GM12878 (cell line): ENCODE measurements at regions of chr19 and their contacts with region 1.

Region 1: DNA sequence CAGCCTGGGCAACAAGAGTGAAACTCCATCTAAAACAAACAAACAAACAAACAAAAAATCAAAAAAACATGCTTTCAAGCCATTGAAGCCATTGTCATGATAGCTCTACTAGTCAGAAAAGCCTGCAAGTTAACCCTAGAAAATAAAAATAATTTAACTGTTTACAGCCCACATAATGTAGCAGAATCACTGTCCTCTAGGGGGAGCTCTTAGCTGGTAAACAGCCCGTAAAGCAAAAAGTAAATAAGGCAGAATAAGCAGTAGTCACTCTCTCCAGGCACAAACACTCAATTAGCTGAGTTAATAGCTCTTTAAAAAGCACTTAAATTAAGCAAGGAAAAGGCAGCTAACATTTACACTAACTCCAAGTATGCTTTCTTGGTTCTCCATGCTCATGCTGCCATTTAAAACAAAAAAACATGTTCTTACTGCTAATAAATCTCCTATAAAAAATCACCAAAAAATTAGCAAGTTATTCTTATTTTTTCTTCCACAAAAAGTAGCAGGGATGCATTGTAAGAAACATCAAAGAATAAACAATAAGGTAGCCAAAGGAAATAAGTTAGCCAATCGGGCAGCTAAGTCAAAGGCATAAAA is 11.3 kb downstream of the LILRB4 start:
- DNase-seq: no peak
- ATAC-seq: peak; percentile 79
- H3K4me3 ChIP-seq: no peak overlapping the region
- H3K27ac ChIP-seq: no peak overlapping the region
- H3K4me1 ChIP-seq: no peaks in the 10 kb centered on the region
- H3K27me3 ChIP-seq: peaks cover 0 to 5% of the 10 kb centered on the region in 2 experiments; a peak in 2 of 4 replicates
- CTCF ChIP-seq: peak; percentile 57 to 74 (median 74)
- EP300 ChIP-seq: no peak
- POLR2A ChIP-seq: no peak
- RAD21 ChIP-seq: peak; percentile 70

Region 2: GRCh38 chr19:54473021-54473891 is 200.9 kb before region 1 on chr19 and contains the start of gene CDC42EP5:
- CTCF ChIA-PET with region 1: interaction called, 236 read pairs
- POLR2A ChIA-PET with region 1: no interaction called
- RAD21 ChIA-PET with region 1: interaction called, 43 read pairs
- SMC1A ChIA-PET with region 1: interaction called, 118 read pairs
- in situ Hi-C with region 1: loop called (anchors 5 kb)
- intact Hi-C with region 1: no loop called
- DNase-seq: no peak
- ATAC-seq: peak; percentile 51
- H3K4me3 ChIP-seq: no peak within 1 kb of the TSS
- H3K27ac ChIP-seq: no peak within 1 kb of the TSS
- H3K4me1 ChIP-seq: peaks cover 3% of the 10 kb centered on the region
- H3K27me3 ChIP-seq: peaks cover 0 to 3% of the 10 kb centered on the region in 2 experiments; a peak in 2 of 4 replicates
- CTCF ChIP-seq: no peak
- EP300 ChIP-seq: no peak
- POLR2A ChIP-seq: no peak
- RAD21 ChIP-seq: no peak
- polyA plus RNA-seq, gene CDC42EP5: not detected

Region 3: DNA sequence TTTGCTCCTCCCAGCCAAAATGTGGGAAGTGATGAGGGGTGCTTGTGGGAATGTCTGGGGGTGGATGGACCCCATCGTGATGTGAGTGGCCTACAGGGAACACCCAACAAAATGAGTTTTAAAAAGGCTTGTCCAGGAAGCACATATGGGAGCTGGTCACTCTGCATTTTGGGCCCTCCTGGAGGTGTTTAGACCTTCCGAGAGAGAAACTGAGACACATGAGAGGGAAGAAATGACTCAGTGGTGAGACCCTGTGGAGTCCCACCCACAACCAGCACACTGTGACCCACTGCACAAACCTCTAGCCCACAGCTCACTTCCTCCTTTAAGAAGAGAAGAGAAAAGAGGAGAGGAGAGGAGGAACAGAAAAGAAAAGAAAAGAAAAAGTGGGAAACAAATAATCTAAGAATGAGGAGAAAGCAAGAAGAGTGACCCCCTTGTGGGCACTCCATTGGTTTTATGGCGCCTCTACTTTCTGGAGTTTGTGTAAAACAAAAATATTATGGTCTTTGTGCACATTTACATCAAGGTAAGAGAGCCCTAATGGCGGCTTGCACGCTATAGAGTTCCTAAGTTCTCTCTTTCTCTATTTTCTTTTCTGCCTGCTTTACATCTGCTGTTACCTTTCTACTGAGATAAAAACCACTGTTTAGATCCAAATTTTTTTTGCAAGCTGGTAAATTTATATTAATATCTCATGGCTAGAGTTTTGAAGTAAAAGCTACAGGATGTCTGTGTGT is 57.1 kb before region 1 on chr19:
- CTCF ChIA-PET with region 1: interaction called, 56 read pairs
- POLR2A ChIA-PET with region 1: interaction called, 3 read pairs
- RAD21 ChIA-PET with region 1: interaction called, 6 read pairs
- SMC1A ChIA-PET with region 1: interaction called, 15 read pairs
- in situ Hi-C with region 1: no loop called
- intact Hi-C with region 1: no loop called
- DNase-seq: peak; percentile 93
- ATAC-seq: peak; percentile 90
- H3K4me3 ChIP-seq: peak overlapping the region; percentile 96
- H3K27ac ChIP-seq: peak overlapping the region; percentile 98
- H3K4me1 ChIP-seq: peaks cover 13% of the 10 kb centered on the region
- H3K27me3 ChIP-seq: no peaks in the 10 kb centered on the region
- CTCF ChIP-seq: no peak
- EP300 ChIP-seq: peak; percentile 91 to 94
- POLR2A ChIP-seq: no peak; the same call in 1 of the 2 replicates
- RAD21 ChIP-seq: 0 out of 2 replicates have a peak, but pooled peaks have one; percentile 5

Region 4: DNA sequence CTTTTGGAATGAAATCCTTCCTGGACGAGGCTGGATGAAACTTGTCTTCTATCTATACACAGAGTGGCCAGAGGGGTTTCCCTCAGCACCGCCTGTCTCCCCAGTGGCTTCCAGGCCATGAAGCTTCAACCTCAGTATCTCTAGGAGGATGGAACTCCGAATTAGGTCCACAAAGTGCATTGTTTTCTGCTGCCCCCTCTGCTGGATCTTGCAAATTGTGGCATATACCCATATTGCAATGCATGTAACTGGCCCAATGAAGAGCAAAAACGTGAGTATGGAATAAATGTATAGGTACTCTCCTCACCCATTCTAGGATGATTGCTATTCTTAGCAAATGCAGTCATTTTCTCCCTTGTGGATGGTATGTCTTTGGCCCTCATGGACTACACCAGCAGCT is 26.0 kb before region 1 on chr19:
- CTCF ChIA-PET with region 1: interaction called, 842 read pairs
- POLR2A ChIA-PET with region 1: interaction called, 27 read pairs
- RAD21 ChIA-PET with region 1: interaction called, 189 read pairs
- SMC1A ChIA-PET with region 1: interaction called, 268 read pairs
- in situ Hi-C with region 1: no loop called
- intact Hi-C with region 1: loop called (anchors 1 kb)
- DNase-seq: no peak
- ATAC-seq: peak; percentile 64
- H3K4me3 ChIP-seq: no peak overlapping the region
- H3K27ac ChIP-seq: no peak overlapping the region
- H3K4me1 ChIP-seq: peaks cover 3% of the 10 kb centered on the region; the same call in 1 of the 2 replicates
- H3K27me3 ChIP-seq: no peaks in the 10 kb centered on the region; a peak in 1 of 4 replicates
- CTCF ChIP-seq: peak in 2 of 3 experiments; percentile 29 to 40; a peak in 3 of 6 replicates
- EP300 ChIP-seq: no peak
- POLR2A ChIP-seq: no peak
- RAD21 ChIP-seq: peak; percentile 43

Region 5: GRCh38 chr19:54662730-54663129 is 11.4 kb before region 1 on chr19 and contains the start of gene LILRB4:
- CTCF ChIA-PET with region 1: interaction called, 842 read pairs
- POLR2A ChIA-PET with region 1: interaction called, 21 read pairs
- RAD21 ChIA-PET with region 1: interaction called, 24 read pairs
- SMC1A ChIA-PET with region 1: interaction called, 268 read pairs
- in situ Hi-C with region 1: no loop called
- intact Hi-C with region 1: no loop called
- DNase-seq: no peak
- ATAC-seq: peak; percentile 79
- H3K4me3 ChIP-seq: peak within 1 kb of the TSS; percentile 49
- H3K27ac ChIP-seq: peak within 1 kb of the TSS; percentile 57
- H3K4me1 ChIP-seq: peaks cover 34% of the 10 kb centered on the region
- H3K27me3 ChIP-seq: no peaks in the 10 kb centered on the region
- CTCF ChIP-seq: no peak
- EP300 ChIP-seq: no peak
- POLR2A ChIP-seq: no peak; the same call in 1 of the 2 replicates
- RAD21 ChIP-seq: no peak
- polyA plus RNA-seq, gene LILRB4: 2.0 to 4.9 TPM

Region 6: GRCh38 chr19:54696117-54696548 is 22.0 kb after region 1 on chr19:
- CTCF ChIA-PET with region 1: interaction called, 10 read pairs
- POLR2A ChIA-PET with region 1: no interaction called
- RAD21 ChIA-PET with region 1: no interaction called
- SMC1A ChIA-PET with region 1: no interaction called
- in situ Hi-C with region 1: no loop called
- intact Hi-C with region 1: no loop called
- DNase-seq: no peak
- ATAC-seq: no peak
- H3K4me3 ChIP-seq: no peak overlapping the region
- H3K27ac ChIP-seq: no peak overlapping the region
- H3K4me1 ChIP-seq: no peaks in the 10 kb centered on the region
- H3K27me3 ChIP-seq: no peaks in the 10 kb centered on the region
- CTCF ChIP-seq: no peak
- EP300 ChIP-seq: no peak
- POLR2A ChIP-seq: no peak
- RAD21 ChIP-seq: no peak

Region 7: GRCh38 chr19:54740134-54740497 is 66.0 kb after region 1 on chr19:
- CTCF ChIA-PET with region 1: no interaction called
- POLR2A ChIA-PET with region 1: no interaction called
- RAD21 ChIA-PET with region 1: no interaction called
- SMC1A ChIA-PET with region 1: no interaction called
- in situ Hi-C with region 1: no loop called
- intact Hi-C with region 1: no loop called
- DNase-seq: no peak
- ATAC-seq: no peak
- H3K4me3 ChIP-seq: no peak overlapping the region
- H3K27ac ChIP-seq: no peak overlapping the region
- H3K4me1 ChIP-seq: no peaks in the 10 kb centered on the region
- H3K27me3 ChIP-seq: no peaks in the 10 kb centered on the region
- CTCF ChIP-seq: no peak
- EP300 ChIP-seq: no peak
- POLR2A ChIP-seq: no peak
- RAD21 ChIP-seq: no peak